Adrenal gland (tissue), 19 donors: ENCODE measurements at regions of chr6 and their contacts with region 1.

Region 1: GRCh38 chr6:39184906-39185580 is 44.2 kb downstream of the KCNK5 start:
- DNase-seq: peak in 5 of 7 donors; percentile 27 to 47 (median 42)
- H3K4me3 ChIP-seq: no peak overlapping the region
- H3K27ac ChIP-seq: no peak overlapping the region
- H3K4me1 ChIP-seq: no peaks in the 10 kb centered on the region
- H3K27me3 ChIP-seq: no peaks in the 10 kb centered on the region
- CTCF ChIP-seq: no peak
- POLR2A ChIP-seq: no peak

Region 2: GRCh38 chr6:39296745-39297640 is 112.0 kb after region 1 on chr6:
- intact Hi-C with region 1: loop called in 1 of 2 experiments (anchors 5 kb)
- DNase-seq: peak; percentile 71 to 91 (median 77)
- H3K4me3 ChIP-seq: no peak overlapping the region
- H3K27ac ChIP-seq: peak overlapping the region in 3 of 5 donors; percentile 39 to 69 (median 42)
- H3K4me1 ChIP-seq: peaks cover 0 to 18% of the 10 kb centered on the region in 2 donors
- H3K27me3 ChIP-seq: no peaks in the 10 kb centered on the region
- CTCF ChIP-seq: no peak
- POLR2A ChIP-seq: peak in 1 of 2 donors; percentile 4

Region 3: GRCh38 chr6:39451831-39452230 is 266.8 kb after region 1 on chr6:
- intact Hi-C with region 1: no loop called
- DNase-seq: no peak
- H3K4me3 ChIP-seq: no peak overlapping the region
- H3K27ac ChIP-seq: no peak overlapping the region
- H3K4me1 ChIP-seq: no peaks in the 10 kb centered on the region
- H3K27me3 ChIP-seq: no peaks in the 10 kb centered on the region
- CTCF ChIP-seq: peak in 1 of 6 experiments; percentile 34
- POLR2A ChIP-seq: no peak

Region 4: GRCh38 chr6:39909661-39910060 is 724.6 kb after region 1 on chr6:
- intact Hi-C with region 1: no loop called
- DNase-seq: no peak
- H3K4me3 ChIP-seq: no peak overlapping the region
- H3K27ac ChIP-seq: no peak overlapping the region
- H3K4me1 ChIP-seq: no peaks in the 10 kb centered on the region
- H3K27me3 ChIP-seq: no peaks in the 10 kb centered on the region
- CTCF ChIP-seq: no peak
- POLR2A ChIP-seq: no peak